Activated CD4-positive, alpha-beta T cell treated with anti-CD3 and anti-CD28 coated beads for 36 hours (primary cell): ENCODE measurements at regions of chr14 and their contacts with region 1.

Region 1: GRCh38 chr14:22556990-22557623 is 31.9 kb downstream of the DAD1 start:
- DNase-seq: peak; percentile 96
- ATAC-seq: peak; percentile 10
- H3K4me3 Mint-ChIP-seq: peak overlapping the region; percentile 76
- H3K27ac Mint-ChIP-seq: peak overlapping the region; percentile 100
- H3K4me1 Mint-ChIP-seq: peaks cover 86% of the 10 kb centered on the region
- H3K27me3 Mint-ChIP-seq: no peaks in the 10 kb centered on the region

Region 2: GRCh38 chr14:21269252-21270046 is 1287.7 kb before region 1 on chr14 and contains the start of gene HNRNPC:
- CTCF ChIA-PET with region 1: no interaction called
- POLR2A ChIA-PET with region 1: no interaction called
- intact Hi-C with region 1: loop called in 1 of 2 experiments (anchors 5 kb)
- DNase-seq: peak; percentile 100
- ATAC-seq: peak; percentile 89
- H3K4me3 Mint-ChIP-seq: peak within 1 kb of the TSS; percentile 93
- H3K27ac Mint-ChIP-seq: peak within 1 kb of the TSS; percentile 100
- H3K4me1 Mint-ChIP-seq: peaks cover 25% of the 10 kb centered on the region
- H3K27me3 Mint-ChIP-seq: no peaks in the 10 kb centered on the region
- total RNA-seq, gene HNRNPC: 1,155 to 1,665 TPM

Region 3: GRCh38 chr14:21868442-21869046 is 688.6 kb before region 1 on chr14:
- CTCF ChIA-PET with region 1: interaction called, 3 read pairs
- POLR2A ChIA-PET with region 1: no interaction called
- intact Hi-C with region 1: loop called (anchors 5 kb)
- DNase-seq: peak; percentile 90
- ATAC-seq: peak; percentile 92
- H3K4me3 Mint-ChIP-seq: peak overlapping the region; percentile 65
- H3K27ac Mint-ChIP-seq: peak overlapping the region; percentile 65
- H3K4me1 Mint-ChIP-seq: peaks cover 34% of the 10 kb centered on the region
- H3K27me3 Mint-ChIP-seq: no peaks in the 10 kb centered on the region

Region 4: GRCh38 chr14:22122227-22122818 is 434.8 kb before region 1 on chr14:
- CTCF ChIA-PET with region 1: interaction called, 5 read pairs
- POLR2A ChIA-PET with region 1: no interaction called
- intact Hi-C with region 1: loop called (anchors 5 kb)
- DNase-seq: peak; percentile 33
- ATAC-seq: no peak
- H3K4me3 Mint-ChIP-seq: peak overlapping the region; percentile 77
- H3K27ac Mint-ChIP-seq: peak overlapping the region; percentile 92
- H3K4me1 Mint-ChIP-seq: peaks cover 13% of the 10 kb centered on the region
- H3K27me3 Mint-ChIP-seq: no peaks in the 10 kb centered on the region

Region 5: DNA sequence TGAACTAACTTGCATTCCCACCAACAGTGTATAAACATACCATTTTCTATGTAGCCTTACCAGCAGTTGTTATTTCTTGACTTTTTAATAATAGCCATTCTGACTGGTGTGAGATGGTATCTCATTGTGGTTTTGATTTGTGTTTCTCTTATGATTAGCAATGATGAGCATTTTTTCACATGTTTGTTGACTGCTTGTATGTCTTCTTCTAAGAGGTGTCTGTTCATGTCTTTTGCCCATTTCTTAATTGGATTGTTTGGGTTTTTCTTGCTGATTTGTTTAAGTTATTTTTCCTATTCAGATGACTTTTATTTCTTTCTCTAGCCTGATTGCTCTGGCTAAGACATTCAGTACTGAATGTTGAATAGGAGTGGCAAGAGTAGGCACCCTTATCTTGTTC is 198.4 kb before region 1 on chr14:
- CTCF ChIA-PET with region 1: no interaction called
- POLR2A ChIA-PET with region 1: no interaction called
- intact Hi-C with region 1: no loop called
- DNase-seq: no peak
- ATAC-seq: no peak
- H3K4me3 Mint-ChIP-seq: no peak overlapping the region
- H3K27ac Mint-ChIP-seq: no peak overlapping the region
- H3K4me1 Mint-ChIP-seq: no peaks in the 10 kb centered on the region
- H3K27me3 Mint-ChIP-seq: no peaks in the 10 kb centered on the region

Region 6: DNA sequence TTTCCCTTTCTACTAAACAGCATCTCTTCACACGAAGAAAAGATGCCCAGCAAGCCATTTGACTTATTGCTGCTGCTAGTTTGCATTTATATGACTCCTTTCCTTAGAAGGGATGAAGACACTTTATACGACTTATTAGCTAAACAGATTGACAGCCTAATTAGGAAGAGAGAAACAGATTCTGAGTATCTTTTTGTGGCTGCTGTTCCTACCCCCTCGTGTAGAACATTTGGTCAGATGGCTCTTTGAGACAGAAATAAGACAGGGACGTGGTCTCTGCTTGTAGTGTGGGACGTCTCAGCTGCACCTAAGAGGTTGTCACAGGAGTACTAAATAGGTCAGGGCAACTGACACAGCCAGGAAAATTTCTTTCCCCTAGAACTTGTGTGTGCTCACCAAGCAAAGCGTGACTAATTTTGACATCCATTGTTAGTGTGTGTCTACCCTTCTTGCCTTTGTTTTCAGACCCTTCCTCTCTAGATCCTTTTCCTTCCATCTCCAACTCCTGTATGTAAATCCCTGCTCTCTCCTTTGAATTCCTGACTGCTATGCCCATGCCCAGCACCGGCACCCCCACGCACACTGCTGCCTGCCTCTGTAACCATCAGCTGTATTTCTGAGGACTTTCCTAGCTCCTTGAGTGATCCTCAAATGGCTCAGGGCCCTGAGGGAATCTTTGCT is 51.3 kb before region 1 on chr14:
- CTCF ChIA-PET with region 1: interaction called, 25 read pairs
- POLR2A ChIA-PET with region 1: interaction called, 34 read pairs
- intact Hi-C with region 1: loop called (anchors 1 kb)
- DNase-seq: peak; percentile 51
- ATAC-seq: peak; percentile 34
- H3K4me3 Mint-ChIP-seq: peak overlapping the region; percentile 84
- H3K27ac Mint-ChIP-seq: peak overlapping the region; percentile 98
- H3K4me1 Mint-ChIP-seq: peaks cover 33% of the 10 kb centered on the region
- H3K27me3 Mint-ChIP-seq: no peaks in the 10 kb centered on the region

Region 7: DNA sequence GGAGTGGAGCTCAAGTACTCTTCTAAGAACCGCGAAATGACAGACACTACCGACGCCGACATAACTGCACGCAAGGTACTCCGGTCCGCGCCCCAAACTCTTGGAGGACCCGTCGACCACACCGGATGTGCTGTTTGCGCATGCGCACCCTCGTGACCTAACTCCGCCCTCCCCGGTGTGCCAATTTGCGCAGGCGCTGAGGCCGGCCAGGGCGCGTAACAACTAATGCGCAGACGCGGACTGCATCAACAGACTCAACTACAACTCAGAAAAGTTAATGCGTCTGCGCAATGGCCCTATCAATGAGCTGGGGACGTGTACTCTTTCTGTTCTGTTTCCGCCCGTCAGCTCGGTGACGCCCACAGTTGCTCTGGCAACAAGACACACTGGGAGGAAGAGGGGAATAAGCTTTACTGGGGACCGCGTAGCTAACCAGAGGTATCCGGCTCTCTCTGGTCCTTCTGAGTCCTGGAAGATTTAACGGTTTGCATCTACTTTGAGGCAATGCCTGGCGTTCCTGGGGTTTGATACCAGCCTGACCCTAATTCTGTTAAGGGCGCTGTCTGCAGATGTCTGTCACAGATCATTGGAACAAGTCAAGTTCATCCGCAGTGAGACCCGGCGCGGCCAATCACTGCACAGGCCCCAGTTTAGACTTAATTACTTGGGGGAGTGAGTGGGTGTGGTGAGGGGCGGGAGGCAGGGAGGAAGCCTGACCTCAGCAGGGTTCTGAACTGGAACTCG is 32.2 kb after region 1 on chr14 and contains the start of gene DAD1:
- CTCF ChIA-PET with region 1: interaction called, 342 read pairs
- POLR2A ChIA-PET with region 1: interaction called, 30 read pairs
- intact Hi-C with region 1: loop called (anchors 1 kb)
- DNase-seq: peak; percentile 100
- ATAC-seq: peak; percentile 84
- H3K4me3 Mint-ChIP-seq: peak within 1 kb of the TSS; percentile 93
- H3K27ac Mint-ChIP-seq: peak within 1 kb of the TSS; percentile 97
- H3K4me1 Mint-ChIP-seq: peaks cover 72% of the 10 kb centered on the region
- H3K27me3 Mint-ChIP-seq: peaks cover 1% of the 10 kb centered on the region
- total RNA-seq, gene DAD1: 265 to 302 TPM

Region 8: GRCh38 chr14:22829661-22830442 is 272.7 kb after region 1 on chr14 and contains the start of gene MRPL52:
- CTCF ChIA-PET with region 1: interaction called, 4 read pairs
- POLR2A ChIA-PET with region 1: interaction called, 3 read pairs
- intact Hi-C with region 1: loop called in 1 of 2 experiments (anchors 1 kb)
- DNase-seq: peak; percentile 94
- ATAC-seq: peak; percentile 92
- H3K4me3 Mint-ChIP-seq: peak within 1 kb of the TSS; percentile 82
- H3K27ac Mint-ChIP-seq: peak within 1 kb of the TSS; percentile 98
- H3K4me1 Mint-ChIP-seq: peaks cover 26% of the 10 kb centered on the region
- H3K27me3 Mint-ChIP-seq: no peaks in the 10 kb centered on the region
- total RNA-seq, gene MRPL52: 115 to 136 TPM